Activated T-helper 1 cell treated with anti-CD3 and anti-CD28 coated beads, Interleukin-12 subunit alpha, Interleukin-12 subunit beta, Interleukin-2, Interleukin-4 antibody, amounts not matched to agents 30 ng/mL and 10 ng/mL and 1 ng/mL, durations not matched to agents 14 hours and 24 hours and 36 hours (primary cell): ENCODE measurements at regions of chr6 and their contacts with region 1.

Region 1: DNA sequence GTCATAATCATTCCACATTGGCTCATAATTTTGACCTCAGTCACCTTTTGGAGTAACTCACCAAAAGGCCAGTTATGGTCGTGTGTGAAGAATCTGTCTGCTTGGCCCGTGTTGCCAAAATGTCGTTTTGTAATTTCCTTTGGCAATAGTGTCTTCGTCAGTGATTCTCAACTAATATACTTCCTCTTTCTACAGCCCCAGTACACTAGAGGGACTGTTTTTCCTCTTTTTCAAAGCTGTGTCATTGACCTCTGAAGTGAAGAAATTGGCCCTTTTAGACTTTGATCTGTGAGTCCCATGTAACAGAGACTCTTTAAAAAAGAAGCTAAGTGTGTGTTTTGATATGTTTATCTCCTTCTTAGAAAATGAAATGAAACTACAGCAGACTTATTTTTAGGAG is 5.2 kb downstream of the FOXO3 start:
- DNase-seq: no peak
- H3K4me3 Mint-ChIP-seq: no peak overlapping the region
- H3K27ac Mint-ChIP-seq: no peak overlapping the region
- H3K4me1 Mint-ChIP-seq: peaks cover 36% of the 10 kb centered on the region
- H3K27me3 Mint-ChIP-seq: peaks cover 51% of the 10 kb centered on the region

Region 2: GRCh38 chr6:107786709-107787588 is 778.9 kb before region 1 on chr6:
- intact Hi-C with region 1: no loop called
- DNase-seq: peak; percentile 40
- H3K4me3 Mint-ChIP-seq: peak overlapping the region; percentile 71
- H3K27ac Mint-ChIP-seq: no peak overlapping the region
- H3K4me1 Mint-ChIP-seq: peaks cover 57% of the 10 kb centered on the region
- H3K27me3 Mint-ChIP-seq: peaks cover 8% of the 10 kb centered on the region

Region 3: GRCh38 chr6:108518714-108519576 is 46.9 kb before region 1 on chr6:
- intact Hi-C with region 1: no loop called
- DNase-seq: no peak
- H3K4me3 Mint-ChIP-seq: no peak overlapping the region
- H3K27ac Mint-ChIP-seq: no peak overlapping the region
- H3K4me1 Mint-ChIP-seq: no peaks in the 10 kb centered on the region
- H3K27me3 Mint-ChIP-seq: peaks cover 16% of the 10 kb centered on the region

Region 4: DNA sequence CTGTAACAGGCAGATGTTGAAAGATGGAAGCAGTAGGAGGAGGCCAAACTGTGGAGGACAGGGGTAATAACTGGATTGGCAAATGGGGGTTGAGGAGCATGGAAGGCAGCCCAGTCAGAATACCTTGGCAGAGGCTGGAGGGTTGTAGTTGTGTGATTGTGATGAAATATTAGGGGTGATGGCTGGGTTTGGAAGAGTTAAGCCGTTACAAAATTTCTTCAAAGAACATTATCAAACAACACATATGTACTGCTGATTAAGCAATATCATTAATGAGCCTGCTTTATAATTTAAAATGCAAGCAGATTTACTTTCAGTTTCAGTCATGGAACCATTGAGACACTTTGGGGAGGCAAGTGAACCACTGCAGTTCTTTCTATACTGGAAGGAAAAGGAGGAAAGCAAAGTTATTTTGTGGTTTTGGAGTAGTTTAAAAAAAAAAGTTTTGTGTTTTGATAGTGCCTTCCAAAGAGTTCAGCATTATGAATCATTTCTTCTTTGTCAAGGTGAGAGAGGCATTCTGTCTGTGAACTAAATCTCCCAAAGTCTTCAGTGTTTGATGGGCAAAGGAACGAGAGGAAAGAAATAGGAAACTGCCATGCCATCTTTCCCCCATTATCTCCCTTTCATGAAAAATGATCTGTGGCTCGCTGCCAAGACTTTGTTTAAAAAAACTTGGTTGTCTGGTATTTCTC is 15.5 kb after region 1 on chr6:
- intact Hi-C with region 1: loop called (anchors 1 kb)
- DNase-seq: no peak
- H3K4me3 Mint-ChIP-seq: no peak overlapping the region
- H3K27ac Mint-ChIP-seq: no peak overlapping the region
- H3K4me1 Mint-ChIP-seq: peaks cover 19% of the 10 kb centered on the region
- H3K27me3 Mint-ChIP-seq: peaks cover 4% of the 10 kb centered on the region

Region 5: DNA sequence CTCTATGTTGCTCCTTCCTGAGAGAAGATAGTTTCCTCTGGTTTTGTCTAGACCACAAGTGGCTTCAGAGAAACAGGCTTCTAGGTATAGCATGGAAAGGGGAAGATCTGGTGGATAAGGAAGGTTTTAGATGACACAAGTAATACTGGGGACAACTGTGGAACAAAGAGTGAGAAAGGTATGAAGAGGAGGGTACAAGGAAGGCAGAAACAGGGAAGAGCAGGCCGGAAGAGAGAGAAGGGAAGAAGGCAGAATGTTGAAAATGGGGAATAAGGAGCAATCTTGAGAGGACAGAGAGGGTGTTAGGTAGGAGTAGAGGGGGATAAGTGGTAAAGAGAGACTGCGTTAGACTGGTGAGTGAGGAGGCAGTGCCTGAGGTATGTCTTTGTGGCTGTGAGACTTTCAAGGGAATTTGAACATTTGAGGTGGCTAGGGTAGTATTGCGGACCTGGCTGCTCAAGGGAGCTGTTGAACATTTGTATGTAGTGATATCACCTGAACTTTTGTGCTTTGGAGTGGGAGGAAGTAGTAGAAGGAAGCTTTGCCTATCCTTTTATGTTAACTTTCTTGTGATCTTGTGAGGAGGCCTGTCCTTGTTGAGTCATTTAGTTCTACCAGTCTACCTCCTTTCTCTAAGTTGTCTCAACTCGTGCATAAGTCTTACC is 64.3 kb after region 1 on chr6:
- intact Hi-C with region 1: loop called (anchors 1 kb)
- DNase-seq: no peak
- H3K4me3 Mint-ChIP-seq: peak overlapping the region; percentile 3
- H3K27ac Mint-ChIP-seq: peak overlapping the region; percentile 9
- H3K4me1 Mint-ChIP-seq: peaks cover 31% of the 10 kb centered on the region
- H3K27me3 Mint-ChIP-seq: peaks cover 10% of the 10 kb centered on the region